Mucosa of descending colon (tissue), 3 donors: ENCODE measurements at regions of chr10 and their contacts with region 1.

Region 1: DNA sequence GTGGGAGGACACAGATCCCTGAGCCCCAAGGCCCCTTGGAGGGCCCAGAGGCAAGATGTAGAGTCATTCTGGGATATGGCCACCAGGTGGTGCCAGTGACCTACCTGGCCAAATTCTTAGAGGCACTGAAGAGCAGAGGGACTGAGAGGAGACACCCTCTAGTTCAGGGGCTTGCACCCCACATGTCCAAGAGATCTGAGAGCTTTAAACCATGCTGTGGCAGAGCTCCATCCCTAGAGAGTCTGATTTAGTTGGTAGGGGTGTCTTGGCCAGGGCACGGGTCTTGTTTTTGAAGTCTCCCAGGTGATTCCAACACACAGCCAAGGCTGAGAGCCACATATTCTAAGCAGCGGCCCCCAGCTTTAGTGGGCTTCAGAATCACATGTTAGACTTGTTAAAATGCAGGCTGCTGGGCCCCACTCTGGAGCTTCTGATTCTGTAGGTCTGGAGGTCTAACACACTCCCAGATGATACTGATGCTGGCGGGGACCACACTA is 52.5 kb downstream of the PRF1 start:
- DNase-seq: peak in 2 of 3 donors; percentile 75 to 81
- ATAC-seq: peak; percentile 76
- H3K4me3 ChIP-seq: no peak overlapping the region
- H3K4me1 ChIP-seq: no peaks in the 10 kb centered on the region
- CTCF ChIP-seq: peak; percentile 75

Region 2: DNA sequence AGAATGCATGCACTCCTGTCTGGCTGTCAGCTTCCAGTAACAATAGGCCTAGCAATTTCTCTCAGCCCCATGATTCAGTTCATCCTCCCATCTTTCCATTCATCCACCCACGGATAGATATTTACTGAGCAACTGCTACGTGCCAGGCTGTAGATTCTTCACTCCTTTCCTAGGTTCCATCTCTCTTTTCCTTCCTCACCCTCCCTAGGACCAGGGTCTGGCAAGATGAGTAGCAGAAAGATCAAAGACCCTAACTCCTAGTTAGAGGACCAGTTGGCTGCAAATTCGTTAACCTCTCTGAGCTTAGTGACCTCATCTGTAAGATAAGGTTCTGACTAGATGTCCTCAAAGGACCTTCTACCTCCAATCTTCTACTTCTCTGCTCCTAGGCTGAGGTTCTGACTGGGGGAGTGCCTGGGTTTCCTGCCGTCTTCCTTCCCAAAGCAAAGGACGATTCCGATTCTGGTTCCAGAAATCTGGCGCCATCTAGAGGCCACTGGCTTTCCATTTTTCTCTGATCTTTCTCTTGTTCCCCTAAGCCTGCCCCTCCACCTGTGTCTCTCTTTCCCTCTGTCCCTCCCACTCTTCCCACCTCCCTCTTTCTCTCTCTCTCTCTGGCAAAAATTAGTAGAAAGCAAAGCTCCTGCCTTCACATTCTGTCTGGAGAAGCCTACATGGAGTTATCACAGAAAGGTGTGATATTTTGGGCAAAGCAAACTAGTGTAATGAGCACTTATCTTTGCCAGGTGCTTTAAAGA is 208.9 kb after region 1 on chr10:
- intact Hi-C with region 1: loop called (anchors 5 kb)
- DNase-seq: peak in 2 of 3 donors; percentile 48 to 86
- ATAC-seq: peak; percentile 53
- H3K4me3 ChIP-seq: no peak overlapping the region
- H3K4me1 ChIP-seq: peaks cover 4% of the 10 kb centered on the region
- CTCF ChIP-seq: peak; percentile 38

Region 3: DNA sequence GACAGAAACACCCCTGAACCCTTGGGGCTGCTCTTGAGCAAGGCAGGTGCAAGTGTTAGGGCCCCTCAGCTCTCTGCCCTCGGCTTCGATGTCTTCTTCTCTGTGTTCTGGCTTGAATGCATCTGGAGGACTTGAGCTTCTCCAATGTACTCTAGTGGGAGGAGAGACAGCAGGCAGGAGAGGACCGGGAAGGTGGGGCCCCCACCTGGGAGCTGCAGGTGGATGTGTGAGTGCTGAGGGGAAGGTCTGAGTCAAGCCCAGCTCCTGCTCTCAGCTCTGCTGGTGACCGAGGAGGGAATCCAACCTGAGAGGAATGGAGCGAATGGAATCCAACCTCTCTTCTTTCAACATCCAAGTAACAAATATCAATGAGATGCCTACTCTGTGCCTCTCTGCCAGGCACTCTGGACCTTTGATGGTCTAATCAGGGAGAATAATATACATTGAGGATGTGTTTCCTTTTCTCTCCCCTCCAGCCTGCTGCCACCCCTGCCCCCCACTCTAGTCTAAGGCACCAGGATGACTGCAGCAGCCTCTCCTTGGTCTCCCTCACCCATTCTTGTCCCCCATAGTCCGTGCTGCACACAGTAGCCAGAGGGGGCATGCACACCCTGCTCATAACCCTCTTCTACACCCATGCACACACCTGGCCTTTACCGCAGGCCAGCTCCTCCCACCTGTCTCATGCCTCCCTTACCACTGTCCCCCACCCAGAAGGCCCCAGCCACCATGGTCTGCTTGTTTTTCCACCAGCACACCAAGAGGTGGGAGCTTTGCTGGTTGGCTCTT is 221.5 kb after region 1 on chr10:
- intact Hi-C with region 1: no loop called
- DNase-seq: no peak
- ATAC-seq: no peak
- H3K4me3 ChIP-seq: no peak overlapping the region
- H3K4me1 ChIP-seq: no peaks in the 10 kb centered on the region
- CTCF ChIP-seq: no peak

Region 4: DNA sequence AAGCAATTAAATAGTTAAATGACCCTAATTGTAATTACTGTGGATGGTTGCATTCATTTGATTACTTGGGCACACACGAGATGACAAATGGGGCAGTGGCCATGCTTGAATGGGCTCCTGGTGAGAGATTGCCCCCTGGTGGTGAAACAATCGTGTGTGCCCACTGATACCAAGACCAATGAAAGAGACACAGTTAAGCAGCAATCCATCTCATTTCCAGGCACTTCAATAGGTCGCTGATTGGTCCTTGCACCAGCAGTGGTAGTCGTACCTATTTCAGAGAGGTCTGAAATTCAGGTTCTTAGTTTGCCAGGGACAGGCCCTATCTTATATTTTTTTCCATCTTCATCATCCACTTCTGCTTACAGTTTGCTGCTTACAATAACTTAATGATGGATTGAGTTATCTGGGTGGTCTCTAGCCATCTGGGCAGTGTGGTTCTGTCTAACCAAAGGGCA is 330.1 kb after region 1 on chr10:
- intact Hi-C with region 1: loop called in 1 of 2 experiments (anchors 10 kb)
- DNase-seq: peak in 2 of 3 donors; percentile 77 to 93
- ATAC-seq: peak; percentile 95
- H3K4me3 ChIP-seq: no peak overlapping the region
- H3K4me1 ChIP-seq: no peaks in the 10 kb centered on the region
- CTCF ChIP-seq: peak; percentile 75